Astrocyte of the cerebellum (primary cell): ENCODE measurements at regions of chr13 and their contacts with region 1.

Region 1: GRCh38 chr13:85816413-85816812 is 17.2 kb upstream of the SLITRK6 start:
- DNase-seq: no peak
- H3K4me3 ChIP-seq: no peak overlapping the region
- CTCF ChIP-seq: no peak

Region 2: DNA sequence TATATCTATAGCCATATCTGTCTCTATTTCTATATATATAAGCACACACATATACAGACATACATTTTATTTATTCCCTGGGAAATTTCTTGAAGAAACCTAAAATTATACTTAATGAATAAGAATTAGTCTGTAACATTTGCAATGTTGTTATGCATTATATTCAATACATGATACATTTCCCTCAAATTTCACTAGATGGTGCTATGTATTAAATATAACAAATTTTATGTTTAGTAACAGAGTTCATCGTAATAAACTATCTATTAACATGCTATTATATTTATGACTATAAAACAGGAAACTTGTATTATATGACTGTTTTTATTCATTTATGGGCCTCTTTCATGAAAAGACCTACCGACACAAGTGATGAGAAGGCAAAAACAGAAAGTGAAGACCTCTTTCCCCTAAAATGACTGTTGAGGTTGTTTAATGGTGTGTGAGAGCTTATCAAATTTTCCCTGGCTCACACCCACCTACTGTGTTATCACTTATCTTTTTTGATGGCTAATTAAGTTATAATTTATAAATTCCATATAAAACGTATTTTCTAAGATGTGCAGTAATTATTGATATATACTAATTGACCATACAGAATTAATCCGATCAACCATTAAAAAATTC is 899.0 kb before region 1 on chr13:
- in situ Hi-C with region 1: loop called (anchors 10 kb)
- DNase-seq: peak; percentile 4
- H3K4me3 ChIP-seq: no peak overlapping the region
- CTCF ChIP-seq: no peak